ENCODE measurements at regions of chr12 and their contacts with region 1.

Region 1: DNA sequence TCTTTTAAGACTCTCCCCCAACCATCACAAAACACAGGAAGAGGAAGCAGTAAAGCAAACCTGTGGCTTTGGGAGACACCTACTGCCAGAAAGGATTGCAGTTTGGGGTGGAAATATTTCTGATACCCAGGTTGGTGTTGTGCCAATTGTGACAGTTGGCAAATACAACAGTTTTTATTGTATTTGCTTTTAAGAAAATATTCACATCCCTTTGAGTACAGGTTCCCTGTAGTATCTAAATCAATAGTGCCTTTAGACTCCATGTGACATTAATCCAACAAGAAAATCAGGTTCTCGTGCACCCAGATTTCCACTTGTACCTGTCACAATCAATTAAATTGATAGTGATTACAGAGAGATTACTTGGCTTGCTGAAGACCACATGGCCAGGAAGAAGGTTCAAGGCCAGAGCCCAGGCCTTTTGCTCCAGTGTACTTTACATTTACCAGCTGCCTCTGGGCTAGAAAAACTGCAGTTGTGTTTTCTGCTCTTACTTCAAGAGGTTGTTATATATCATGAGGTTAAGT is 361.2 kb downstream of the ATP23 start:
- DNase-seq: no peak

Region 2: GRCh38 chr12:58262796-58263195 is 39.8 kb before region 1 on chr12:
- in situ Hi-C with region 1: loop called (anchors 5 kb)
- DNase-seq: no peak

Region 3: DNA sequence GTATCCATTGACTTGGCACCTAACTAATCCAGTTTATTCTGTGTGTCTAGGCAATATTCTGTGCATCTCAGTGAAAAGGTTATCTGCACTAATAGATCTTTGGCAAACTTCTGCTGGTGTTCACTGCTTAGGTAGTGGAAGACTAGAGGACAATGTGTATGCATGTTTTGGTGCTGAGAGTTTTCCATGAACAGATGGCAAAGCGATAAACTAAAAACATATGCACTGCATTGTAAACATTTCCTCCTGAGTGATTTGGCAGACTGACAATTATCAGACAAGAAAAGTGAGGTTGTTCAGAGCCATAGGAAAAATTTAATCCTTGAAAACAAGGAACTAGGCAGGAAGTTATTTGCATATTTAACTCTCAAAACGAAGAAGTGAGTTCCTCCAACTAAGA is 39.2 kb after region 1 on chr12:
- in situ Hi-C with region 1: no loop called
- DNase-seq: no peak